Calu3 (cell line): ENCODE measurements at regions of chr17 and their contacts with region 1.

Region 1: GRCh38 chr17:50200457-50201275 is 765 bp downstream of the COL1A1 start:
- DNase-seq: peak; percentile 95
- H3K4me3 Mint-ChIP-seq: peak overlapping the region; percentile 68
- H3K27ac Mint-ChIP-seq: peak overlapping the region; percentile 33
- H3K4me1 Mint-ChIP-seq: peaks cover 21% of the 10 kb centered on the region
- H3K27me3 Mint-ChIP-seq: peaks cover 88% of the 10 kb centered on the region
- CTCF ChIP-seq: peak; percentile 100

Region 2: GRCh38 chr17:49968380-49969133 is 232.1 kb before region 1 on chr17:
- CTCF ChIA-PET with region 1: no interaction called
- intact Hi-C with region 1: no loop called
- DNase-seq: peak; percentile 94
- H3K4me3 Mint-ChIP-seq: peak overlapping the region; percentile 90
- H3K27ac Mint-ChIP-seq: peak overlapping the region; percentile 46
- H3K4me1 Mint-ChIP-seq: peaks cover 29% of the 10 kb centered on the region
- H3K27me3 Mint-ChIP-seq: peaks cover 99% of the 10 kb centered on the region
- CTCF ChIP-seq: no peak

Region 3: GRCh38 chr17:50169121-50169764 is 31.4 kb before region 1 on chr17:
- CTCF ChIA-PET with region 1: interaction called, 46 read pairs
- intact Hi-C with region 1: loop called (anchors 1 kb)
- DNase-seq: peak; percentile 64
- H3K4me3 Mint-ChIP-seq: peak overlapping the region; percentile 14
- H3K27ac Mint-ChIP-seq: peak overlapping the region; percentile 15
- H3K4me1 Mint-ChIP-seq: peaks cover 12% of the 10 kb centered on the region
- H3K27me3 Mint-ChIP-seq: peaks cover 46% of the 10 kb centered on the region
- CTCF ChIP-seq: peak; percentile 83

Region 4: DNA sequence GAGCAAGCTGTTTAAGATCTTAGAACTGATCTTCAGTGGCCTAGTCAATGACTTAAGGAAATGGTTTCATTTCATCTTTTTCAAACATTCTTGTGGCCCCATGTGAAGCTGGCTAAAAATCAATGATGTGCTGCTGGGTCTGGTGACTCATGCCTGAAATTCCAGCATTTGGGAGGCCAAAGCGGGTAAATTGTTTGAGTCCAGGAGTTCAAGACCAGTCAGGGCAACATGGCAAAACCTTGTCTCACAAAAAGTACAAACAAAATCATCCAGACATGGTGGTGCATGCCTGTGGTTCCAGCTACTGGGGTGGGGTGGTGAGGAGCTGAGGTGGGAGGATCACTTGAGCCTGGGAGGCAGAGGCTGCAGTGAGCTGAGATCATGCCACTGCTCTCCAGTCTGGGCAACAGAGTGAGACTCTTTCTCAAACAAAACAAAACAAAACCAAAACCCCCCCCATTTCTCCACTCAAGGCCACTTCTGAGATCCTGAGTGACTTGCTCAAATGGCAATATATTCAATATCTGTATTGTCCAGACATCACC is 18.2 kb after region 1 on chr17:
- CTCF ChIA-PET with region 1: interaction called, 13 read pairs
- intact Hi-C with region 1: no loop called
- DNase-seq: peak; percentile 73
- H3K4me3 Mint-ChIP-seq: peak overlapping the region; percentile 47
- H3K27ac Mint-ChIP-seq: no peak overlapping the region
- H3K4me1 Mint-ChIP-seq: peaks cover 51% of the 10 kb centered on the region
- H3K27me3 Mint-ChIP-seq: peaks cover 17% of the 10 kb centered on the region
- CTCF ChIP-seq: no peak

Region 5: DNA sequence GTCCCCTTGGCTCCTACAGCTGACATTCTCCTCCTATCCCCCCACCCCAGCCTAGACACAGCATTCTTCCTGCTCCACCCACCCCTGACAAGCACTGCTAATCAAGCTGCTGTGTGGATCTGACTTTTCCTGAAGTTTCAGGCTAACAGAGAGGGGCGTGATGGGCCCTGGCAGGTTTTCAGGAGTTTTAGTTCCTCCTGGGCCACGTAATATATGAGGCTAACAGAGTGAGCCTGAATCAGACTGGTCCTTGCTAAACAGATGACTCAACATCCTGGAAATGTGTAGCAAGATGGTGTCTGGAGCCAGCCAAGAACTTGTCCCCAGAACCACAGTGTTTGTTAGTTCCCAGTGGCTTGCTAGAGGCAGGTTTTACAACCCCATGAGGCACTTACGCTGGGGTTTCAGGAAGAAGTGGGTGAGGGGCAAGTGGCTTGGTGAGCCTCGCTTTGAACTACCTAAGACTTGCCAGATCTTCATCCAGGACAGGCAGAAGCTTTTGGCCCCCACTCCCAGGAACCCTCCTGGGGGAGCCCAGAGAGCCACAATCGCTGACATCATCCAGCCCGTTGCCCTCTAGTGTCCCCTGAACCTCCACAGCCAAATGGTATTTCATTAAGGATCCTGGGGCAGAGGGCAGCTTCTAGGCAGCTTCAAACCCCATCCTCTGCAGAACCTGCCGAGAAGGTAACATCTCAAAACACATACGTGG is 89.5 kb after region 1 on chr17:
- CTCF ChIA-PET with region 1: interaction called, 90 read pairs
- intact Hi-C with region 1: no loop called
- DNase-seq: peak; percentile 70
- H3K4me3 Mint-ChIP-seq: peak overlapping the region; percentile 10
- H3K27ac Mint-ChIP-seq: peak overlapping the region; percentile 70
- H3K4me1 Mint-ChIP-seq: peaks cover 25% of the 10 kb centered on the region
- H3K27me3 Mint-ChIP-seq: no peaks in the 10 kb centered on the region
- CTCF ChIP-seq: no peak

Region 6: GRCh38 chr17:50397111-50397918 is 196.6 kb after region 1 on chr17 and contains the start of gene LRRC59:
- CTCF ChIA-PET with region 1: interaction called, 14 read pairs
- intact Hi-C with region 1: no loop called
- DNase-seq: peak; percentile 98
- H3K4me3 Mint-ChIP-seq: peak within 1 kb of the TSS; percentile 87
- H3K27ac Mint-ChIP-seq: peak within 1 kb of the TSS; percentile 86
- H3K4me1 Mint-ChIP-seq: peaks cover 47% of the 10 kb centered on the region
- H3K27me3 Mint-ChIP-seq: no peaks in the 10 kb centered on the region
- CTCF ChIP-seq: peak; percentile 100
- total RNA-seq, gene LRRC59: 205 and 212 TPM in 2 replicates